Right ventricle myocardium superior (tissue), 1 donor: ENCODE measurements at regions of chr2 and their contacts with region 1.

Region 1: GRCh38 chr2:237122214-237122666 is 36.6 kb downstream of the COPS8 start:
- DNase-seq: peak; percentile 81
- ATAC-seq: peak; percentile 88

Region 2: GRCh38 chr2:237413777-237414661 is 291.8 kb after region 1 on chr2 and contains the start of gene COL6A3:
- intact Hi-C with region 1: loop called (anchors 10 kb)
- DNase-seq: peak; percentile 76
- ATAC-seq: peak; percentile 62
- total RNA-seq, gene COL6A3: 64.9 TPM

Region 3: GRCh38 chr2:237572021-237572741 is 449.9 kb after region 1 on chr2:
- intact Hi-C with region 1: loop called (anchors 10 kb)
- DNase-seq: peak; percentile 93
- ATAC-seq: peak; percentile 95

Region 4: DNA sequence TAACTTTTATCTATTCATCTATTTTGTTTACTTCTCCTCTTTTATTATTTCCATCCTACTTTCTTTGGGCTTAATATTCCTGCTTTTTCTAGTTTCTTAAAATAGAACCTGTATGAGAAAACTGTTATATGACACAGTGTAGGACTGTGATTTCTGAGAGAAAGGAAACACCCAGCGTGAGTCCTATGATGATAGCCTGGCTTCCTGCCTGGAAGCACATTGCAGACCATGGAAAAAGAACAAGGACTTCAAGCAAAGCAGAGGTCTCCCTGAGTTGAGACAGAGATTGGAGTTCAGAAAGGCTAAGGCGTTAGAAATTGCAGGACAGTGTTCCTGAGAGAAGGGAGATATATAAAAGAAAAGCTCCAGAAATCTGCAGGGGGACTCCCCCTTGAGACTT is 684.1 kb after region 1 on chr2:
- intact Hi-C with region 1: no loop called
- DNase-seq: no peak
- ATAC-seq: peak; percentile 55